ENCODE measurements at regions of chr12 and their contacts with region 1.

Region 1: GRCh38 chr12:48105862-48106680 is at the start of gene SENP1:
- DNase-seq: peak; percentile 86 to 94
- ATAC-seq: peak; percentile 95 to 98
- H3K4me3 ChIP-seq: peak within 1 kb of the TSS; percentile 93
- H3K27ac ChIP-seq: peak within 1 kb of the TSS; percentile 97 to 99
- H3K4me1 ChIP-seq: peaks cover 13% of the 10 kb centered on the region
- CTCF ChIP-seq: no peak
- EP300 ChIP-seq: no peak
- POLR2A ChIP-seq: peak; percentile 48; the same call in 1 of the 2 replicates
- RAD21 ChIP-seq: no peak
- polyA plus RNA-seq, gene SENP1: 49.2 and 49.3 TPM in 2 replicates

Region 2: DNA sequence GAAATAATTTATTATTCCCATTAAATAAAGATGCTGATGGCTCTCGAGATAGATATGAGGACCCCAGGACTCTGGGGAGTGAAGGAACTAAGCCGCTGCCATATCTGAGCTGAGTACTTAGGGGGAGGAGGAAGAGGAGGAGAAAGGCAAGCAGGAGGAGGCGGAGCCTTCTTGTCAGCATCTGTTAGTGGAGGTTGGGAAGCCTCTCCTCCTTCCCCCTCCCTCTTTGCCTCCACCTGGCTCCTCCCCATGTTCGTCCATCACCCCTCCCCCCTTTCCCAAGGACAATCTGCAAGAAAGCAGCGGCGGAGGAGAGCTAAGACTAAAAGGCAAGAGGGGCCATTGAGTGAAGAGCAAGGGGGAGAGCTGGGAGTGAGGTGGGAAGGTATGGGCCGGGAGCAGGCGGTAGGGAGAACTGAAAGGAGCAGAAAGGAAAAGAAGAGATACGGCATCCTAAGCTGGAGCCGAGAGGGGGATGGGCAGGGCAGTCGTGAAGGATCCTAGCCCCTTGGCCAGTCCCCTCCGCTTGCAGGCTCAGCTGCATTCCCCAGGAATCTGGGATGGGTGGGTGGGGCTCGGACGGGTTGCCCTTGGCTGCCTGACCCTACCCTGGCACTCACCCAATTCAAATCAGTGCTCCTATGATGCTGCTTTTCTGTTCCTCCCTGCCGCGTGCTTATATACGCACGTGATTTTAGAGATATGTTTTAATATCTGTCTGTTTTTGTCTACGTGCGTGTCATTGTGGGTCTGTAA is 13.2 kb after region 1 on chr12 and contains the start of gene PFKM:
- CTCF ChIA-PET with region 1: interaction called, 3 read pairs
- POLR2A ChIA-PET with region 1: interaction called, 17 read pairs
- DNase-seq: peak; percentile 92 to 93
- ATAC-seq: peak; percentile 99 to 100
- H3K4me3 ChIP-seq: peak within 1 kb of the TSS; percentile 74
- H3K27ac ChIP-seq: peak within 1 kb of the TSS; percentile 74 to 88
- H3K4me1 ChIP-seq: peaks cover 16% of the 10 kb centered on the region
- CTCF ChIP-seq: no peak
- EP300 ChIP-seq: no peak
- POLR2A ChIP-seq: peak; percentile 47
- RAD21 ChIP-seq: no peak
- polyA plus RNA-seq, gene PFKM: 43.0 and 45.5 TPM in 2 replicates